Endothelial cell of umbilical vein (primary cell): ENCODE measurements at regions of chr2 and their contacts with region 1.

Region 1: GRCh38 chr2:61707969-61708852 is 145.6 kb downstream of the FAM161A start:
- DNase-seq: no peak
- H3K4me3 ChIP-seq: no peak overlapping the region
- H3K27ac ChIP-seq: no peak overlapping the region
- H3K4me1 ChIP-seq: no peaks in the 10 kb centered on the region
- H3K27me3 ChIP-seq: peaks cover 4 to 5% of the 10 kb centered on the region in 2 experiments
- CTCF ChIP-seq: no peak
- POLR2A ChIP-seq: no peak

Region 2: GRCh38 chr2:61718965-61719364 is 10.8 kb after region 1 on chr2:
- CTCF ChIA-PET with region 1: interaction called, 11 read pairs
- POLR2A ChIA-PET with region 1: no interaction called
- dilution Hi-C with region 1: no loop called
- intact Hi-C with region 1: no loop called
- DNase-seq: no peak
- H3K4me3 ChIP-seq: no peak overlapping the region
- H3K27ac ChIP-seq: no peak overlapping the region
- H3K4me1 ChIP-seq: no peaks in the 10 kb centered on the region
- H3K27me3 ChIP-seq: no peaks in the 10 kb centered on the region
- CTCF ChIP-seq: no peak
- POLR2A ChIP-seq: no peak